ENCODE measurements at regions of chr3 and their contacts with region 1.

Region 1: DNA sequence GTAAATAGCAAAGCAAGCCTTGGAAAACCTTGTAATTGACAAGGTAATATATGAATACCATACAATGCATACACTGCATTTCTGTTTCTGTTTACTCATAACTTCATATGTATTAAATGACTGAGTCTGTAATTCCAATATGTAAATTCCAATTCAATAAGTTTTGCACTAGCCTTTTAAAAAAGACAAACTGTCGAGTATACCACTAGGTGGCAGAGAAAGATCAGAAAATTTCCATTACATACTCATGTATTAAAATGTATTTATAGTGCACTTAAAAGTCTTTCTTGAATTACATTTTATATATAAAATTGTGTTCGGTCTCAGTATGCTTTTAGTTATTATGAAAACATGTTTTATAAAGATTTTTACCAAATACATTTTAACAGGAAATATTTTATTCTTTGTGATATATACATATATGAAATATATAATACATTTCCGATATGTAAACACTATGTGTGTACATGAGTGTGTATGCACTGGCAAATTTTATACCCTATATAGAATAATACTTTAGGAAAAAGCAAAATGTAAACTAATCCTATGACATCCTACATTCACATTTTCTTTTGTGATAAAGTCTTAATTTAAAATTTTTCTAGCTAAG is 216.8 kb downstream of the VGLL3 start:
- DNase-seq: no peak
- H3K4me3 Mint-ChIP-seq: no peak overlapping the region
- H3K27ac Mint-ChIP-seq: no peak overlapping the region
- H3K4me1 Mint-ChIP-seq: no peaks in the 10 kb centered on the region
- H3K27me3 Mint-ChIP-seq: no peaks in the 10 kb centered on the region
- CTCF ChIP-seq: no peak

Region 2: DNA sequence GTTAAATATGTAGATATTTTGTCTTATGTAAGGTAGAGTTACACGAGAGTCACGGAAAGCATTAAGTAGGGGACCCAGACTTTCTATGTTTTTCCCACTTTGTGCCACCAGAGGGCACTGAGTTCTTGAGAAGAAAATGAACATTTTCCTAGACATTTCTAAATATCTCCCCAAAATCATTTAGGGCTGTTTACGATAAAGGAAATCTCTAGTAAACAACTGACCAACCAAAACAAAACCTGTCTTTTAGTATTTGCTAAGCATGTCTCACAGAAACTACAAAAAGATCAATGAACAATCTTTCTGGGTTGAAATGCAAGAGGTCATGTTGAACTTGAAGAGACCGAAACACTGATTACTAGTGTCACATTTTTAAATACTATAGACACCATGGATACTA is 486.1 kb after region 1 on chr3:
- CTCF ChIA-PET with region 1: no interaction called
- intact Hi-C with region 1: loop called (anchors 10 kb)
- DNase-seq: peak; percentile 62
- H3K4me3 Mint-ChIP-seq: no peak overlapping the region
- H3K27ac Mint-ChIP-seq: no peak overlapping the region
- H3K4me1 Mint-ChIP-seq: no peaks in the 10 kb centered on the region
- H3K27me3 Mint-ChIP-seq: no peaks in the 10 kb centered on the region
- CTCF ChIP-seq: no peak

Measured in Calu3 (cell line).